ENCODE measurements at regions of chr1 and their contacts with region 1.

Region 1: DNA sequence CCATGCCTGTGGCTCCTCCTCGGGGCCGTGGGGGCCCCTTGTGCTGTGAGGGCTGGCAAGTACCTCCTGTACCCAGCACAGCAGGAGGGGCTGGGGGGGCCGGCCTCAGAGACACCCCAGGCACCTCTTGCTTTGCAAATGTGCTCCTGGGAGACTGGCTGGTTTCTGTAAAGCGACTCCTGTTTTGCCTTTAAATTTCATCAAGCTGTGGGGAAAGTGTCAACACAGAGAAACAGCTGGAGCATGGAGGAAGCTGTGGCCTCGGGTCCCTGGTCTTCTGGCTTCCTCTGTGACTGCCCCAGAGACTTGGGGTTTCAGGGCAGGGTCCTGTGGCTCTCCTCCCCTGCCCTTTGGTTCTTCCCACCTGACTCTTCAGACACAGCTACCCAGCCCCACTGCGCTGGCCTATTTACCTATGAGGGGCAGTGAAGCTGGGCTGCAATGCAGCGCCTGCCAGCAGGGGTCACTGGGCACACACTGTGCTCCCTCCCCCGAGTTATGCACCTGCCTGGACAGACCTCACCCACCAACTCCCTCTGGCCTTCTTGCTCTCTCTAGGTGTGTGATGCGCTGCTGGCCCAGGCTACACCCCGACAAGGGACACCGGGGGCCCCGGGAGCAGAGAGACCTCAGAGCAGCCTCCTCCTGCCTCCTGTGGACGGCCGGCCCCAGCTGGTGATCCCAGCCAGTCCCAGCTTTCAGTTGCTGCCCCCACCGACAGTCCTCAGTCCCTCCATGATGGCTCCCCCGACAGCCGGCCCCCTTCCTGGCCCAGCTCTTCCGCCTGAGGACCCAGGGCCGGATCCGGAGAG is 17.6 kb upstream of the PEX10 start:
- DNase-seq: no peak
- ATAC-seq: no peak
- H3K4me3 ChIP-seq: no peak overlapping the region
- H3K27ac ChIP-seq: no peak overlapping the region
- H3K4me1 ChIP-seq: no peaks in the 10 kb centered on the region
- H3K27me3 ChIP-seq: peaks cover 6 to 78% (median 21%) of the 10 kb centered on the region in 9 donors
- CTCF ChIP-seq: peak in 3 of 12 donors; percentile 5 to 10 (median 8)
- POLR2A ChIP-seq: no peak

Region 2: GRCh38 chr1:2474933-2475371 is 45.0 kb after region 1 on chr1:
- intact Hi-C with region 1: no loop called
- DNase-seq: peak in 1 of 5 donors; percentile 24
- ATAC-seq: peak in 3 of 4 donors; percentile 38 to 63 (median 58)
- H3K4me3 ChIP-seq: no peak overlapping the region
- H3K27ac ChIP-seq: no peak overlapping the region
- H3K4me1 ChIP-seq: peaks cover 0 to 10% (median 0%) of the 10 kb centered on the region in 12 donors
- H3K27me3 ChIP-seq: peaks cover 0 to 48% (median 0%) of the 10 kb centered on the region in 9 donors
- CTCF ChIP-seq: no peak
- POLR2A ChIP-seq: no peak

Region 3: DNA sequence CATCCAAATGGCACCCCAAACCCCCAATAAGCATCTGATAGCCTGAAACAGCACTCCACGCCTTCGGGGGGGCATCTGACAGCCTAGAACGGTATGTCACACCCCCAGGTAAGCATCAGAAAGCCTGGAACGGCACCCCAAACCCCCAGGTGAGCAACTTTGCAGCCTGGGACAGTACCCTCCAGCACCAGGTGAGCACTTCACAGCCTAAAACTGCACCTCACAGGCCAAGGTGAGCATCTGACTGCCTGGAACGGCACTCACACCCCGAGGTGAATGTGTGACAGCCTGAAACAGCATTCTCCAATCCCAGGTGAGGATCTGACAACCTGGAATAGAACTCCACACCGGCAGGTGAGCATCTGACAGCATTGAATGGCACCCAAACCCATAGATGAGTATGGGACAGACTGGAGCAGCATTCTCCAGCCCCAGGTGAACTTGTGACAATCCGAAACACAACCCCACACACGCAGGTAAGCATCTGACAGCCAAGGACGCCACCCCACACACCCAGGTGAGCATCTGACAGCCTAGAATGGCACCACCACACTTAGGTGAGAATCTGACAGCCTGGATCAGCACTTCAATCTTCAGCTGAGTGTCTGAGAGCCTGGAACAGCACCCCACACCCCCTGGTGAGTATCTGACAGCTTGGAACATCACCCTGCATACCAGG is 221.1 kb after region 1 on chr1:
- intact Hi-C with region 1: loop called in 1 of 10 experiments (anchors 10 kb)
- DNase-seq: peak in 3 of 5 donors; percentile 6 to 43 (median 9)
- ATAC-seq: no peak
- H3K4me3 ChIP-seq: no peak overlapping the region
- H3K27ac ChIP-seq: no peak overlapping the region
- H3K4me1 ChIP-seq: no peaks in the 10 kb centered on the region
- H3K27me3 ChIP-seq: peaks cover 0 to 18% (median 3%) of the 10 kb centered on the region in 9 donors
- CTCF ChIP-seq: no peak
- POLR2A ChIP-seq: no peak

Measured in heart left ventricle (tissue), 16 donors.